ENCODE measurements at regions of chr10 and their contacts with region 1.

Region 1: DNA sequence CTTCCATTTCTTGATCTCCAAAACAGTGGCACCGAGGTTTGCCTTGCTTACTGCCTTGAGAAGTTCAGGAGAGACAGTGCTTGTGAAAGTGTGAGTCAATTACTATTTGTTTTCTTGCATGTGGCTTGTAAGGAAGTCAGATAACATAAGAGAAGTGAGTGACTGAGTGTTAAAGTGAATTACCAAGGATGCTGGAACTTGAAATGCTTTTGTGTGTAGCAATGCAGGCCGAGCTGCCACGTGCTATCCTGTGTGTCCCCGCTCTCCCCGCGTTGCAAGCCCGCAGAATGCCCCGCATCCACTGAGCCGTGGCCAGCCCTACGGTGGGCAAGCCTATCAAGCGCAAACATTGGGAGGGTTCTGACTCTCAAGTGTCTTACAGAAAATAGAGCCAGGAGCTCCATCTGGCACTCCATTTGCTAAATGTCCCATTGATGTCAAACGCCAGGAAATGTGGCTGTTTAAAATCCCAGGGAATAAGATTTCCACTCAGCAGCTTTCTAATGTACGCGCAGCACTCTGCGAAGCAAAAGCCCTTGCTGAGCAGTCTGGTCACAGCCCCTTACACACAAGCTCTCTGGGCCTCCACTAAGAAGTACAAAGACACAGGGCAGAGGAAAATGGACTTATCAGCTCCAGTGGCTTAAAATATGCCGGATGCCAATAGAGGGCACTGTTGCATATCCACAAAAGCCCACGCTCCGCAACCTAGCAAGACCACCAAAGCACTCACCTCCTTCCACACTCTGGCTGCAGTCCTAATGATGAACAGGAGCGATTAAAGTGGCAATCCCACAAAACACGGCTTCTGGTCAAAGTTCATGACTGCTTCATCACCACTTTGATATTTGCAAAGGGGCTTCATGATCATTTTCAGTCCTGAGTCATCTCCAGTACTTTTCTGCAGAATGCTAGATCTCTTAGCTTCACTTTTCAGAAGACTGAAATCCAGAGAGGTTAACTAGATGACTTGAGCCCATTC is 158.0 kb upstream of the ITGB1 start:
- DNase-seq: peak; percentile 60
- H3K4me3 ChIP-seq: no peak overlapping the region
- H3K27ac ChIP-seq: no peak overlapping the region
- H3K4me1 ChIP-seq: peaks cover 0 to 20% of the 10 kb centered on the region in 2 experiments; a peak in 3 of 4 replicates
- H3K27me3 ChIP-seq: no peaks in the 10 kb centered on the region
- CTCF ChIP-seq: peak; percentile 73
- EP300 ChIP-seq: no peak
- RAD21 ChIP-seq: peak; percentile 78

Region 2: GRCh38 chr10:33041779-33042437 is 74.1 kb before region 1 on chr10:
- CTCF ChIA-PET with region 1: no interaction called
- POLR2A ChIA-PET with region 1: no interaction called
- DNase-seq: peak; percentile 50
- H3K4me3 ChIP-seq: no peak overlapping the region
- H3K27ac ChIP-seq: no peak overlapping the region
- H3K4me1 ChIP-seq: peaks cover 0 to 8% of the 10 kb centered on the region in 2 experiments; a peak in 1 of 4 replicates
- H3K27me3 ChIP-seq: no peaks in the 10 kb centered on the region
- CTCF ChIP-seq: no peak
- EP300 ChIP-seq: no peak
- RAD21 ChIP-seq: no peak

Region 3: GRCh38 chr10:33103863-33104379 is 12.1 kb before region 1 on chr10:
- CTCF ChIA-PET with region 1: interaction called, 11 read pairs
- POLR2A ChIA-PET with region 1: no interaction called
- DNase-seq: no peak
- H3K4me3 ChIP-seq: no peak overlapping the region
- H3K27ac ChIP-seq: no peak overlapping the region
- H3K4me1 ChIP-seq: no peaks in the 10 kb centered on the region
- H3K27me3 ChIP-seq: no peaks in the 10 kb centered on the region
- CTCF ChIP-seq: no peak
- EP300 ChIP-seq: no peak
- RAD21 ChIP-seq: no peak

Region 4: GRCh38 chr10:33134011-33134751 is 18.2 kb after region 1 on chr10:
- CTCF ChIA-PET with region 1: interaction called, 12 read pairs
- POLR2A ChIA-PET with region 1: no interaction called
- DNase-seq: no peak
- H3K4me3 ChIP-seq: no peak overlapping the region
- H3K27ac ChIP-seq: peak overlapping the region; percentile 31 to 93; a peak in 3 of 4 replicates
- H3K4me1 ChIP-seq: peaks cover 3 to 30% of the 10 kb centered on the region in 2 experiments; a peak in 3 of 4 replicates
- H3K27me3 ChIP-seq: no peaks in the 10 kb centered on the region
- CTCF ChIP-seq: no peak
- EP300 ChIP-seq: peak; percentile 17 to 92; a peak in 3 of 4 replicates
- RAD21 ChIP-seq: no peak

Region 5: GRCh38 chr10:33139181-33139646 is 23.2 kb after region 1 on chr10:
- CTCF ChIA-PET with region 1: interaction called, 10 read pairs
- POLR2A ChIA-PET with region 1: no interaction called
- DNase-seq: no peak
- H3K4me3 ChIP-seq: no peak overlapping the region
- H3K27ac ChIP-seq: no peak overlapping the region
- H3K4me1 ChIP-seq: peaks cover 4 to 16% of the 10 kb centered on the region in 2 experiments; a peak in 2 of 4 replicates
- H3K27me3 ChIP-seq: no peaks in the 10 kb centered on the region
- CTCF ChIP-seq: no peak
- EP300 ChIP-seq: no peak
- RAD21 ChIP-seq: no peak

Region 6: DNA sequence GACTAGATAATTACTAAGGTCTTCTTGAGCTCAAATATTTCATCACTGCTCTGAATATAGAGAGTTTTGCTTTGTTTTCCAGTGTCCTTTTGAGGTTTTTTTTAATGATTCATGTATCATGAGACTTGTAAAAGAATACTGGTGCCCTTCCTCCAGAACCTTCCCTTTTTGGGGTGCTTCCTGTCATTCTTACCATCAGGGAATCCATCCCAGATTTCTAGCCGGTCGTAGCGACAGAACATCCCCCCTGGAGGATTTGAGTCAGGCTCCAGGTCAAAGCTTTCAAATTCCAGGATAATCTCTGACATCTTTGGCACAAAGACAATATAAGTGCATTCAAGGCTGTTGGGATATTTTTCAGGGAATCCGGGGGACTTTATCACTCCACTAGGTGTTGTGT is 147.4 kb after region 1 on chr10:
- CTCF ChIA-PET with region 1: no interaction called
- POLR2A ChIA-PET with region 1: no interaction called
- DNase-seq: no peak
- H3K4me3 ChIP-seq: no peak overlapping the region
- H3K27ac ChIP-seq: peak overlapping the region; percentile 86 to 97
- H3K4me1 ChIP-seq: peaks cover 3 to 31% of the 10 kb centered on the region in 2 experiments
- H3K27me3 ChIP-seq: no peaks in the 10 kb centered on the region
- CTCF ChIP-seq: no peak
- EP300 ChIP-seq: peak in 1 of 2 experiments; percentile 54; a peak in 1 of 4 replicates
- RAD21 ChIP-seq: no peak

Region 7: GRCh38 chr10:33402220-33403073 is 286.4 kb after region 1 on chr10:
- CTCF ChIA-PET with region 1: no interaction called
- POLR2A ChIA-PET with region 1: no interaction called
- DNase-seq: no peak
- H3K4me3 ChIP-seq: no peak overlapping the region
- H3K27ac ChIP-seq: no peak overlapping the region
- H3K4me1 ChIP-seq: peaks cover 0 to 6% of the 10 kb centered on the region in 2 experiments; a peak in 1 of 4 replicates
- H3K27me3 ChIP-seq: no peaks in the 10 kb centered on the region
- CTCF ChIP-seq: no peak
- EP300 ChIP-seq: no peak
- RAD21 ChIP-seq: no peak

Measured in SK-N-SH (cell line).